Activated T-helper 2 cell treated with anti-CD3 and anti-CD28 coated beads, Interferon-gamma antibody, Interleukin-2, Interleukin-4, amounts not matched to agents 10 μg/mL and 5 μg/mL and 100 μg/mL, durations not matched to agents 14 hours and 24 hours and 36 hours (primary cell): ENCODE measurements at regions of chr9 and their contacts with region 1.

Region 1: GRCh38 chr9:131349881-131350563 is 43.9 kb upstream of the PRRC2B start:
- DNase-seq: peak; percentile 79
- H3K4me3 Mint-ChIP-seq: peak overlapping the region; percentile 33
- H3K27ac Mint-ChIP-seq: no peak overlapping the region
- H3K4me1 Mint-ChIP-seq: peaks cover 8% of the 10 kb centered on the region
- H3K27me3 Mint-ChIP-seq: no peaks in the 10 kb centered on the region

Region 2: DNA sequence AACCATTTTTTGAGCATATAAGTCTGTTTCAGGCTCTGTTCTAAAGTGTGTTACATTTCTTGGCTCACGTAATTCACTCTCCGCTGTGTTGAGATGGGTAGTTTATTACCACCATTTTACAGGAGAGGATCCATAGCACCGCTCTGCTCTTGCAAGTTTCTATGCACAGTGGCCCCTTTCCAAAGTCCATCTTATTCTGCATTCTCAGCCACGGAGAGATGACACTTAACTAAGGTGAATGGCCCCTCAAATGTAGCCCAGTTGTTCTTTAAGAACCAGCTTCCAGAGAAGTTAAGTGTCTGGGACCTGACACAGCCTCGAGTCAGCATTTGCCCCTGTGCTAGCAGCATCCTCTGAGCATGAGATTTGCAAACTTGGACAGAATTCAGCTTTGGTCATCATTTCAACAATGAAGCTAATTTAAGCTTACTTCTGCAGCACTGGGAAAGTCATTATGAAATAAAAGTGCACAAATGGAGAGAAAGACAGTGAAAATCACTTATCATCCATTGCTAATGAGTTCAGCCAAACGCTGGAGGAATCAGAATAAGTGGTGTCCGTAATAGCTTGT is 135.7 kb before region 1 on chr9:
- intact Hi-C with region 1: no loop called
- DNase-seq: no peak
- H3K4me3 Mint-ChIP-seq: no peak overlapping the region
- H3K27ac Mint-ChIP-seq: no peak overlapping the region
- H3K4me1 Mint-ChIP-seq: peaks cover 8% of the 10 kb centered on the region
- H3K27me3 Mint-ChIP-seq: no peaks in the 10 kb centered on the region

Region 3: GRCh38 chr9:131366761-131367401 is 16.9 kb after region 1 on chr9:
- intact Hi-C with region 1: no loop called
- DNase-seq: no peak
- H3K4me3 Mint-ChIP-seq: no peak overlapping the region
- H3K27ac Mint-ChIP-seq: no peak overlapping the region
- H3K4me1 Mint-ChIP-seq: peaks cover under 1% of the 10 kb centered on the region
- H3K27me3 Mint-ChIP-seq: no peaks in the 10 kb centered on the region

Region 4: GRCh38 chr9:131418143-131419028 is 68.4 kb after region 1 on chr9:
- intact Hi-C with region 1: loop called (anchors 10 kb)
- DNase-seq: no peak
- H3K4me3 Mint-ChIP-seq: peak overlapping the region; percentile 74
- H3K27ac Mint-ChIP-seq: peak overlapping the region; percentile 84
- H3K4me1 Mint-ChIP-seq: peaks cover 77% of the 10 kb centered on the region
- H3K27me3 Mint-ChIP-seq: no peaks in the 10 kb centered on the region

Region 5: GRCh38 chr9:131747356-131747755 is 397.3 kb after region 1 on chr9:
- intact Hi-C with region 1: loop called (anchors 5 kb)
- DNase-seq: no peak
- H3K4me3 Mint-ChIP-seq: no peak overlapping the region
- H3K27ac Mint-ChIP-seq: no peak overlapping the region
- H3K4me1 Mint-ChIP-seq: peaks cover 34% of the 10 kb centered on the region
- H3K27me3 Mint-ChIP-seq: peaks cover under 1% of the 10 kb centered on the region